IMR-90 (cell line): ENCODE measurements at regions of chr5 and their contacts with region 1.

Region 1: DNA sequence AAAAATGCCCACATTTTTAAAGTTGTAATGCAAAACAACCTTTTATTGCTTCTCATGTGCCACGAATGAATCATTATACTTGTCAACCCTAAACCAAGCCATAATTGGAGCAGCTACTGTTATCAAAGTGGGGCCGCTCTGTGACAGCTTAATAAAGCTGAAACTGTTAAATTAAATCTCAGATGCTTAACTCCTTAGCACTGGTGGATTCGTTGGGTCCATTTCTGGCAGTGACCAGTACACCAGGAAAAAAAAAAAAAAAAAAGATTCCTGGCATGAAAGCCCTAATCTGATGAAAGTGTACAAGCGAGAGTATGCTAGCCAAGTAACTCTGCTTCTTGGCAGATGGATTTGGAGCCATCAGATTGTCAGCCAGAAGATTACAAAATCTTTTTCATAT is 164.8 kb downstream of the ZSWIM6 start:
- DNase-seq: no peak
- ATAC-seq: no peak
- H3K4me3 ChIP-seq: no peak overlapping the region
- H3K27ac ChIP-seq: no peak overlapping the region
- H3K4me1 ChIP-seq: peaks cover 5% of the 10 kb centered on the region
- H3K27me3 ChIP-seq: no peaks in the 10 kb centered on the region
- CTCF ChIP-seq: no peak
- POLR2A ChIP-seq: no peak
- RAD21 ChIP-seq: no peak

Region 2: GRCh38 chr5:61455179-61456006 is 41.5 kb before region 1 on chr5:
- CTCF ChIA-PET with region 1: no interaction called
- POLR2A ChIA-PET with region 1: no interaction called
- dilution Hi-C with region 1: no loop called
- in situ Hi-C with region 1: no loop called
- intact Hi-C with region 1: loop called (anchors 5 kb)
- DNase-seq: no peak
- ATAC-seq: no peak
- H3K4me3 ChIP-seq: no peak overlapping the region
- H3K27ac ChIP-seq: no peak overlapping the region
- H3K4me1 ChIP-seq: peaks cover 5% of the 10 kb centered on the region
- H3K27me3 ChIP-seq: no peaks in the 10 kb centered on the region
- CTCF ChIP-seq: no peak
- POLR2A ChIP-seq: no peak
- RAD21 ChIP-seq: no peak

Region 3: GRCh38 chr5:61486476-61486875 is 10.4 kb before region 1 on chr5:
- CTCF ChIA-PET with region 1: no interaction called
- POLR2A ChIA-PET with region 1: no interaction called
- dilution Hi-C with region 1: no loop called
- in situ Hi-C with region 1: no loop called
- intact Hi-C with region 1: loop called (anchors 1 kb)
- DNase-seq: no peak
- ATAC-seq: no peak
- H3K4me3 ChIP-seq: no peak overlapping the region
- H3K27ac ChIP-seq: no peak overlapping the region
- H3K4me1 ChIP-seq: no peaks in the 10 kb centered on the region
- H3K27me3 ChIP-seq: no peaks in the 10 kb centered on the region
- CTCF ChIP-seq: no peak
- POLR2A ChIP-seq: no peak
- RAD21 ChIP-seq: no peak